CD8-positive, alpha-beta T cell (primary cell): ENCODE measurements at regions of chr1 and their contacts with region 1.

Region 1: GRCh38 chr1:193406901-193407300 is 220.5 kb upstream of the B3GALT2 start:
- DNase-seq: peak in 3 of 9 experiments; percentile 8 to 69 (median 57)
- ATAC-seq: peak; percentile 59
- H3K4me3 ChIP-seq: no peak overlapping the region
- H3K4me3 Mint-ChIP-seq: no peak overlapping the region
- H3K27ac ChIP-seq: no peak overlapping the region
- H3K27ac Mint-ChIP-seq: no peak overlapping the region
- H3K4me1 ChIP-seq: peaks cover 10% of the 10 kb centered on the region
- H3K4me1 Mint-ChIP-seq: peaks cover 16% of the 10 kb centered on the region
- H3K27me3 ChIP-seq: no peaks in the 10 kb centered on the region
- H3K27me3 Mint-ChIP-seq: no peaks in the 10 kb centered on the region
- CTCF ChIP-seq: peak; percentile 86

Region 2: DNA sequence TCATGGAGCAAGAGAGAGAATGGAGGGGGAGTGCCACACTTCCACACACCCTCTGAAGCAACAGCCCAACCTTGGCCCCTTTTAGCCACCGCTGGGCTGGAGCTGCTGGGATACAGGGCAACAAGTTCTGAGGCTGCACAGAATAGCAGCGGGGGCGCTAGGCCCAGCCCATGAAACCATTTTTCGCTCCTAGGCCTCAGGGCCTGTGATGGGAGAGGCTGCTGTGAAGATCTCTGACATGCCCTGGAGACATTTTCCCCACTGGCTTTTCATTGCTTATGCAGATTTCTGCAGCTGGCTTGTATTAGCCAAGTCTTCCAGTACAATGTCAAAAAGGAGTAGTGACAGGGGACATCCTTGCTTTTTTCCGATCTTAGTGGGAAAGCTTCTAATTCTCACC is 18.2 kb before region 1 on chr1:
- CTCF ChIA-PET with region 1: no interaction called
- POLR2A ChIA-PET with region 1: no interaction called
- intact Hi-C with region 1: no loop called
- DNase-seq: no peak
- ATAC-seq: no peak
- H3K4me3 ChIP-seq: no peak overlapping the region
- H3K4me3 Mint-ChIP-seq: no peak overlapping the region
- H3K27ac ChIP-seq: no peak overlapping the region
- H3K27ac Mint-ChIP-seq: no peak overlapping the region
- H3K4me1 ChIP-seq: no peaks in the 10 kb centered on the region
- H3K4me1 Mint-ChIP-seq: no peaks in the 10 kb centered on the region
- H3K27me3 ChIP-seq: no peaks in the 10 kb centered on the region
- H3K27me3 Mint-ChIP-seq: no peaks in the 10 kb centered on the region
- CTCF ChIP-seq: no peak

Region 3: DNA sequence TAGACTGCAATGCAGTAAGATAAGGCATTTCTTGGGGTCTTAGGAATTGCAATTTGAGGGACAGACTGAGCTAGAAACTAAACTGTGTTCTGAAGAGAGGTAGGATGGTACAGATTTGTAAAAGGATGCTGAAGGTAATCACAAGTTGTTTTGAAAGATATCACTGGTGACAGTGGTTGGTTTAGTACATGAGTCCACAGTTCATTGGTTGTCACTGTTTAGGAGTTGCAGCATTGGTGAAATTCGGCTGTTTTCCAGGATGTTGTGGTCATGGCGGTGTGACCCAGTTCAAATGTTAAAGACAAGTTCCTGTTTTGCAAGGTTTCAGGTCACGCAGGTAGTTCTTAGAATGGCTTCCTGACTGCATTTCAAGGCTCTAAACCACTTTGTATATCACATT is 72.3 kb after region 1 on chr1:
- CTCF ChIA-PET with region 1: no interaction called
- POLR2A ChIA-PET with region 1: interaction called, 3 read pairs
- intact Hi-C with region 1: loop called in 1 of 2 experiments (anchors 1 kb)
- DNase-seq: peak; percentile 46 to 92 (median 74)
- ATAC-seq: peak; percentile 95
- H3K4me3 ChIP-seq: no peak overlapping the region
- H3K4me3 Mint-ChIP-seq: peak overlapping the region; percentile 27
- H3K27ac ChIP-seq: peak overlapping the region; percentile 56 to 75
- H3K27ac Mint-ChIP-seq: peak overlapping the region; percentile 93
- H3K4me1 ChIP-seq: peaks cover 31% of the 10 kb centered on the region
- H3K4me1 Mint-ChIP-seq: peaks cover 48% of the 10 kb centered on the region
- H3K27me3 ChIP-seq: no peaks in the 10 kb centered on the region
- H3K27me3 Mint-ChIP-seq: no peaks in the 10 kb centered on the region
- CTCF ChIP-seq: no peak

Region 4: GRCh38 chr1:193537266-193538002 is 130.5 kb after region 1 on chr1:
- CTCF ChIA-PET with region 1: no interaction called
- POLR2A ChIA-PET with region 1: no interaction called
- intact Hi-C with region 1: loop called in 1 of 2 experiments (anchors 5 kb)
- DNase-seq: peak in 5 of 9 experiments; percentile 3 to 61 (median 37)
- ATAC-seq: peak; percentile 75
- H3K4me3 ChIP-seq: no peak overlapping the region
- H3K4me3 Mint-ChIP-seq: peak overlapping the region; percentile 69
- H3K27ac ChIP-seq: peak overlapping the region in 1 of 2 experiments; percentile 29
- H3K27ac Mint-ChIP-seq: peak overlapping the region; percentile 73
- H3K4me1 ChIP-seq: no peaks in the 10 kb centered on the region
- H3K4me1 Mint-ChIP-seq: peaks cover 32% of the 10 kb centered on the region
- H3K27me3 ChIP-seq: no peaks in the 10 kb centered on the region
- H3K27me3 Mint-ChIP-seq: no peaks in the 10 kb centered on the region
- CTCF ChIP-seq: no peak

Region 5: DNA sequence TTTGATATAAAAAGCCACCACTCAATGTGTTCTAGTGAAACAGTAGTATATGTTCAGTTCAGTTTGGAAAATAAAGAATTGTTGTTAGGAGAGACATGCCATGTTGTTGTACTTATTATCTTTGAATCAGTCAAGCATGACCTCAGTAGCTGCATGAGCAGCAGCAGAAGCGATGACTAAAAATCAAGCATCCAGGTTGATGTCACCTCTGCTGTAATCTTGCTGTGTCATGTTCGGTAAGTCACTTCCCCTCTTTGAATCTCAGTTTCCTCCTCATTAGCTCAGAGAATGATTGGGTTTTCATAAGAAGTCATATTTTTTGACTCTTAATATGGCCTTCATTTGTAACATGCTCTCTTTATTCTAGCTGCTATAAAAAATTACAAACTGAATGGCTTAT is 207.9 kb after region 1 on chr1:
- CTCF ChIA-PET with region 1: no interaction called
- POLR2A ChIA-PET with region 1: no interaction called
- intact Hi-C with region 1: loop called in 1 of 2 experiments (anchors 5 kb)
- DNase-seq: no peak
- ATAC-seq: no peak
- H3K4me3 ChIP-seq: no peak overlapping the region
- H3K4me3 Mint-ChIP-seq: no peak overlapping the region
- H3K27ac ChIP-seq: no peak overlapping the region
- H3K27ac Mint-ChIP-seq: no peak overlapping the region
- H3K4me1 ChIP-seq: no peaks in the 10 kb centered on the region
- H3K4me1 Mint-ChIP-seq: no peaks in the 10 kb centered on the region
- H3K27me3 ChIP-seq: no peaks in the 10 kb centered on the region
- H3K27me3 Mint-ChIP-seq: no peaks in the 10 kb centered on the region
- CTCF ChIP-seq: no peak

Region 6: GRCh38 chr1:193754732-193755427 is 348.0 kb after region 1 on chr1:
- CTCF ChIA-PET with region 1: no interaction called
- POLR2A ChIA-PET with region 1: no interaction called
- intact Hi-C with region 1: loop called (anchors 1 to 2 kb)
- DNase-seq: peak in 2 of 9 experiments; percentile 3 to 10
- ATAC-seq: no peak
- H3K4me3 ChIP-seq: no peak overlapping the region
- H3K4me3 Mint-ChIP-seq: no peak overlapping the region
- H3K27ac ChIP-seq: no peak overlapping the region
- H3K27ac Mint-ChIP-seq: no peak overlapping the region
- H3K4me1 ChIP-seq: no peaks in the 10 kb centered on the region
- H3K4me1 Mint-ChIP-seq: peaks cover 2% of the 10 kb centered on the region
- H3K27me3 ChIP-seq: no peaks in the 10 kb centered on the region
- H3K27me3 Mint-ChIP-seq: no peaks in the 10 kb centered on the region
- CTCF ChIP-seq: no peak